CD8-positive, alpha-beta T cell (primary cell): ENCODE measurements at regions of chr4 and their contacts with region 1.

Region 1: GRCh38 chr4:40316782-40317635 is 18.1 kb upstream of the CHRNA9 start:
- DNase-seq: peak; percentile 39 to 89 (median 62)
- ATAC-seq: peak; percentile 66
- H3K4me3 ChIP-seq: peak overlapping the region; percentile 38 to 43
- H3K4me3 Mint-ChIP-seq: peak overlapping the region; percentile 82
- H3K27ac ChIP-seq: peak overlapping the region; percentile 63 to 81
- H3K27ac Mint-ChIP-seq: peak overlapping the region; percentile 95
- H3K4me1 ChIP-seq: peaks cover 24% of the 10 kb centered on the region
- H3K4me1 Mint-ChIP-seq: peaks cover 45% of the 10 kb centered on the region
- H3K27me3 ChIP-seq: no peaks in the 10 kb centered on the region
- H3K27me3 Mint-ChIP-seq: no peaks in the 10 kb centered on the region
- CTCF ChIP-seq: peak; percentile 77

Region 2: GRCh38 chr4:40149960-40150385 is 167.0 kb before region 1 on chr4:
- CTCF ChIA-PET with region 1: interaction called, 58 read pairs
- POLR2A ChIA-PET with region 1: interaction called, 3 read pairs
- intact Hi-C with region 1: loop called in 1 of 2 experiments (anchors 2 kb)
- DNase-seq: peak; percentile 46 to 88 (median 75)
- ATAC-seq: peak; percentile 94
- H3K4me3 ChIP-seq: no peak overlapping the region
- H3K4me3 Mint-ChIP-seq: no peak overlapping the region
- H3K27ac ChIP-seq: no peak overlapping the region
- H3K27ac Mint-ChIP-seq: peak overlapping the region; percentile 81
- H3K4me1 ChIP-seq: peaks cover 36% of the 10 kb centered on the region
- H3K4me1 Mint-ChIP-seq: peaks cover 35% of the 10 kb centered on the region
- H3K27me3 ChIP-seq: no peaks in the 10 kb centered on the region
- H3K27me3 Mint-ChIP-seq: no peaks in the 10 kb centered on the region
- CTCF ChIP-seq: peak; percentile 88

Region 3: GRCh38 chr4:40199999-40200874 is 116.8 kb before region 1 on chr4:
- CTCF ChIA-PET with region 1: interaction called, 59 read pairs
- POLR2A ChIA-PET with region 1: interaction called, 11 read pairs
- intact Hi-C with region 1: no loop called
- DNase-seq: peak in 7 of 9 experiments; percentile 41 to 88 (median 67)
- ATAC-seq: peak; percentile 24
- H3K4me3 ChIP-seq: peak overlapping the region; percentile 83 to 87
- H3K4me3 Mint-ChIP-seq: peak overlapping the region; percentile 100
- H3K27ac ChIP-seq: peak overlapping the region; percentile 89 to 96
- H3K27ac Mint-ChIP-seq: peak overlapping the region; percentile 100
- H3K4me1 ChIP-seq: peaks cover 25% of the 10 kb centered on the region
- H3K4me1 Mint-ChIP-seq: peaks cover 41% of the 10 kb centered on the region
- H3K27me3 ChIP-seq: no peaks in the 10 kb centered on the region
- H3K27me3 Mint-ChIP-seq: no peaks in the 10 kb centered on the region
- CTCF ChIP-seq: no peak

Region 4: GRCh38 chr4:40212674-40213527 is 104.1 kb before region 1 on chr4:
- CTCF ChIA-PET with region 1: interaction called, 59 read pairs
- POLR2A ChIA-PET with region 1: interaction called, 4 read pairs
- intact Hi-C with region 1: no loop called
- DNase-seq: peak in 1 of 9 experiments; percentile 59
- ATAC-seq: no peak
- H3K4me3 ChIP-seq: peak overlapping the region; percentile 5 to 31
- H3K4me3 Mint-ChIP-seq: peak overlapping the region; percentile 67
- H3K27ac ChIP-seq: peak overlapping the region; percentile 42 to 96
- H3K27ac Mint-ChIP-seq: peak overlapping the region; percentile 95
- H3K4me1 ChIP-seq: peaks cover 89% of the 10 kb centered on the region
- H3K4me1 Mint-ChIP-seq: peaks cover 93% of the 10 kb centered on the region
- H3K27me3 ChIP-seq: no peaks in the 10 kb centered on the region
- H3K27me3 Mint-ChIP-seq: no peaks in the 10 kb centered on the region
- CTCF ChIP-seq: no peak

Region 5: GRCh38 chr4:40228497-40229365 is 88.3 kb before region 1 on chr4:
- CTCF ChIA-PET with region 1: interaction called, 23 read pairs
- POLR2A ChIA-PET with region 1: interaction called, 9 read pairs
- intact Hi-C with region 1: no loop called
- DNase-seq: peak in 3 of 9 experiments; percentile 35 to 65 (median 43)
- ATAC-seq: no peak
- H3K4me3 ChIP-seq: peak overlapping the region; percentile 3 to 25
- H3K4me3 Mint-ChIP-seq: peak overlapping the region; percentile 82
- H3K27ac ChIP-seq: peak overlapping the region; percentile 29 to 96
- H3K27ac Mint-ChIP-seq: peak overlapping the region; percentile 95
- H3K4me1 ChIP-seq: peaks cover 95% of the 10 kb centered on the region
- H3K4me1 Mint-ChIP-seq: peaks cover 94% of the 10 kb centered on the region
- H3K27me3 ChIP-seq: no peaks in the 10 kb centered on the region
- H3K27me3 Mint-ChIP-seq: no peaks in the 10 kb centered on the region
- CTCF ChIP-seq: peak; percentile 42

Region 6: GRCh38 chr4:40247350-40247749 is 69.7 kb before region 1 on chr4:
- CTCF ChIA-PET with region 1: interaction called, 11 read pairs
- POLR2A ChIA-PET with region 1: interaction called, 4 read pairs
- intact Hi-C with region 1: no loop called
- DNase-seq: peak; percentile 39 to 88 (median 72)
- ATAC-seq: peak; percentile 71
- H3K4me3 ChIP-seq: no peak overlapping the region
- H3K4me3 Mint-ChIP-seq: peak overlapping the region; percentile 36
- H3K27ac ChIP-seq: peak overlapping the region; percentile 52 to 98
- H3K27ac Mint-ChIP-seq: peak overlapping the region; percentile 90
- H3K4me1 ChIP-seq: peaks cover 76% of the 10 kb centered on the region
- H3K4me1 Mint-ChIP-seq: peaks cover 82% of the 10 kb centered on the region
- H3K27me3 ChIP-seq: no peaks in the 10 kb centered on the region
- H3K27me3 Mint-ChIP-seq: no peaks in the 10 kb centered on the region
- CTCF ChIP-seq: no peak

Region 7: GRCh38 chr4:40301603-40302002 is 15.4 kb before region 1 on chr4:
- CTCF ChIA-PET with region 1: interaction called, 24 read pairs
- POLR2A ChIA-PET with region 1: interaction called, 11 read pairs
- intact Hi-C with region 1: loop called in 1 of 2 experiments (anchors 2 kb)
- DNase-seq: peak; percentile 53 to 92 (median 77)
- ATAC-seq: peak; percentile 81
- H3K4me3 ChIP-seq: peak overlapping the region in 1 of 2 experiments; percentile 0
- H3K4me3 Mint-ChIP-seq: peak overlapping the region; percentile 65
- H3K27ac ChIP-seq: peak overlapping the region; percentile 46 to 75
- H3K27ac Mint-ChIP-seq: peak overlapping the region; percentile 98
- H3K4me1 ChIP-seq: peaks cover 91% of the 10 kb centered on the region
- H3K4me1 Mint-ChIP-seq: peaks cover 86% of the 10 kb centered on the region
- H3K27me3 ChIP-seq: no peaks in the 10 kb centered on the region
- H3K27me3 Mint-ChIP-seq: no peaks in the 10 kb centered on the region
- CTCF ChIP-seq: no peak

Region 8: DNA sequence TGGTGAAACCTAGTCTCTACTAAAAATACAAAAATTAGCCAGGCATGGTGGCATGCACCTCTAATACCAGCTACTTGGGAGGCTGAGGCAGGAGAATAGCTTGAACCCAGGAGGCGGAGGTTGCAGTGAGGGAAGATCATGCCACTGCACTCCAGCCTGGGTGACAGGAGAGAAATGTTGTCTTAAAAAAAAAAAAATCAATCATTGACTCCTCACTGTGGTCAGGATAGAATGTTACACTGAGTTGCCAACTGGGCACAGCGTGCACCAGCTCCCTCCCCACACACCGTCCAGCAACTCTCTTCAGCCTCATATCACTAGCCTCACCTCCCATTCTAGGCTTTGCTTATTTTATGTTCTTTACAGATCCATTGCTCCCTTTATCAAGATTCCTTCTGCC is 97.7 kb after region 1 on chr4:
- CTCF ChIA-PET with region 1: no interaction called
- POLR2A ChIA-PET with region 1: no interaction called
- intact Hi-C with region 1: no loop called
- DNase-seq: no peak
- ATAC-seq: no peak
- H3K4me3 ChIP-seq: no peak overlapping the region
- H3K4me3 Mint-ChIP-seq: no peak overlapping the region
- H3K27ac ChIP-seq: no peak overlapping the region
- H3K27ac Mint-ChIP-seq: no peak overlapping the region
- H3K4me1 ChIP-seq: no peaks in the 10 kb centered on the region
- H3K4me1 Mint-ChIP-seq: no peaks in the 10 kb centered on the region
- H3K27me3 ChIP-seq: no peaks in the 10 kb centered on the region
- H3K27me3 Mint-ChIP-seq: no peaks in the 10 kb centered on the region
- CTCF ChIP-seq: no peak

Region 9: DNA sequence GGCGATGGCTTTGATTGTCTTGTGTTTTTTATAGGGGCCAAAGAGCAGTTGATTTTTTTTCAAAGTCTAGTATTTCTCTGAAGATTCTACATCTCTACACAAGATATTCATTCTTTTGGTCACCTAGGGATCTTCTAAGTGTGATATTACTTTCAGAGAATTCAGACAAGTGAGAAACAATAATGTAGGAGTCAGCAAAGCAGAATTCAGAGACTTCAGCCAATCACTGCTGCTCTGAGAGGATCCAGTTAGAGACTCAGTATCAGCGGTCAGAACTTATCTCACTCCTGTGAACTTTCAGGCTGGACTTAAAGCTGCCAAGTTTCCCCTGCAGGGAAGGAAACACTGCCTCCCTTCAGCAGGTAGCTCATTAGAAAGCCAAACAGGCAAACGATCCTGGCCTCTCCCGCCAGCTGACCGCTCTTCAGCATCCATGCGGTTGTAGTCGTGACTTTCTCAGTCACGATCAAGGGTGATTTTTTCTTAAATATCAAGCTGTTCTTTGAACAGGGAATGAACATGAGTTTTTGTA is 492.0 kb after region 1 on chr4:
- CTCF ChIA-PET with region 1: no interaction called
- POLR2A ChIA-PET with region 1: no interaction called
- intact Hi-C with region 1: no loop called
- DNase-seq: no peak
- ATAC-seq: no peak
- H3K4me3 ChIP-seq: no peak overlapping the region
- H3K4me3 Mint-ChIP-seq: no peak overlapping the region
- H3K27ac ChIP-seq: no peak overlapping the region
- H3K27ac Mint-ChIP-seq: no peak overlapping the region
- H3K4me1 ChIP-seq: no peaks in the 10 kb centered on the region
- H3K4me1 Mint-ChIP-seq: no peaks in the 10 kb centered on the region
- H3K27me3 ChIP-seq: no peaks in the 10 kb centered on the region
- H3K27me3 Mint-ChIP-seq: peaks cover 2% of the 10 kb centered on the region
- CTCF ChIP-seq: no peak